Panc1 (cell line): ENCODE measurements at regions of chr12 and their contacts with region 1.

Region 1: GRCh38 chr12:43882578-43883178 is 46.8 kb downstream of the TMEM117 start:
- DNase-seq: peak; percentile 56
- ATAC-seq: peak; percentile 92
- H3K4me3 ChIP-seq: no peak overlapping the region
- H3K27ac ChIP-seq: no peak overlapping the region
- H3K4me1 ChIP-seq: no peaks in the 10 kb centered on the region; the same call in 1 of the 2 replicates
- H3K27me3 ChIP-seq: no peaks in the 10 kb centered on the region
- CTCF ChIP-seq: peak; percentile 87; the same call in 1 of the 2 replicates

Region 2: DNA sequence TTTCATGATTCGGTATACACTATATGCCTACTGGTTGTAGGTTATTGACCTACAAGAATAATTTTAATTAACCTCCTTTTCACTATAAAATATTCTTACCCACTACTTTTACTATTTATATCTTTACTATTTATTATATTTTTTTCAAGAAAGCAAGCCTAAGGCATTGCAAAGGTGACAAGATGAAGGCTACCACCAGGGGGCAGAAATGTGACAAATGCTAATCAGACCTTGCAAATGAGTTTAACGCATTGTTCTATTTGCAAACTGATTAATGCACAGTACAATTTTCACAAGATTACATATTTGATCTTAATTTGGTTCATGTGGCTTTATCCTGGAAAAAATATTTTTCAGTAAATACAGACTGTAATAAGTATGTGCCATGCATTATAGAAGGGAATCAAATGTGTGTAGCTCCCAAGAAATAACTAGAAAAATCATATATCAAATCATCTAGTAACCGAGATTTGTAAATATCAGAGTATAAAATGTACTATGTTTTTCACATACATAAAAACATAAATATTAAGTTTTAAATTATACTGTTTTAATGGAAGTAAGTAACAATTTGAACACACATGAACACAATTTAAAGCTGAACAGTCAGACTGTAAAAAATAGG is 437.6 kb before region 1 on chr12:
- CTCF ChIA-PET with region 1: interaction called, 3 read pairs
- POLR2A ChIA-PET with region 1: no interaction called
- in situ Hi-C with region 1: no loop called
- intact Hi-C with region 1: loop called (anchors 5 kb)
- DNase-seq: peak; percentile 18
- ATAC-seq: no peak; the same call in 1 of the 2 replicates
- H3K4me3 ChIP-seq: no peak overlapping the region
- H3K27ac ChIP-seq: no peak overlapping the region
- H3K4me1 ChIP-seq: no peaks in the 10 kb centered on the region
- H3K27me3 ChIP-seq: no peaks in the 10 kb centered on the region
- CTCF ChIP-seq: peak; percentile 77; the same call in 1 of the 2 replicates

Region 3: GRCh38 chr12:43501703-43502102 is 381.0 kb before region 1 on chr12:
- CTCF ChIA-PET with region 1: interaction called, 3 read pairs
- POLR2A ChIA-PET with region 1: no interaction called
- in situ Hi-C with region 1: no loop called
- intact Hi-C with region 1: loop called (anchors 5 kb)
- DNase-seq: no peak
- ATAC-seq: no peak
- H3K4me3 ChIP-seq: no peak overlapping the region
- H3K27ac ChIP-seq: no peak overlapping the region
- H3K4me1 ChIP-seq: no peaks in the 10 kb centered on the region
- H3K27me3 ChIP-seq: no peaks in the 10 kb centered on the region
- CTCF ChIP-seq: peak; percentile 66; the same call in 1 of the 2 replicates

Region 4: GRCh38 chr12:43676183-43676813 is 206.4 kb before region 1 on chr12:
- CTCF ChIA-PET with region 1: no interaction called
- POLR2A ChIA-PET with region 1: no interaction called
- in situ Hi-C with region 1: no loop called
- intact Hi-C with region 1: no loop called
- DNase-seq: peak; percentile 25
- ATAC-seq: no peak
- H3K4me3 ChIP-seq: no peak overlapping the region
- H3K27ac ChIP-seq: no peak overlapping the region
- H3K4me1 ChIP-seq: no peaks in the 10 kb centered on the region
- H3K27me3 ChIP-seq: no peaks in the 10 kb centered on the region; the same call in 1 of the 2 replicates
- CTCF ChIP-seq: peak; percentile 73

Region 5: DNA sequence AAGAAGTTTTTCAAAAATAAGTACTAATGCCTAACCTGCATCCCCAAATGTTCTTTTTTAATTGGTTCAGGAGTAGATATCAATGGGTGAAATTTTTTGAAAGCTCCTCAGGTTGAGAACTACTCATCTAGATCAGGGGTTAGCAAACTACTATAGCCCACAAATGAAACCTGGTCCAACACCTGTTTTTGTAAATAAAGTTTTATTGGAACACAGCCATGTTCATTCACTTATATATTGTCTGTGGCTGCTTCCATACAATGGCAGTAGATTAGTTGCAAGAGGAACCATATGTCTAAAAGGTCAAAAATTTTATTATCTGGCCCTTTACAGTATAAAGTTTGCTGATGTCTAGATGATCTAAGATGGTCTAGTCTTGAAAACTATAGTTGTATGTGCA is 137.9 kb before region 1 on chr12:
- CTCF ChIA-PET with region 1: no interaction called
- POLR2A ChIA-PET with region 1: no interaction called
- in situ Hi-C with region 1: no loop called
- intact Hi-C with region 1: no loop called
- DNase-seq: no peak
- ATAC-seq: no peak
- H3K4me3 ChIP-seq: no peak overlapping the region
- H3K27ac ChIP-seq: no peak overlapping the region
- H3K4me1 ChIP-seq: no peaks in the 10 kb centered on the region
- H3K27me3 ChIP-seq: no peaks in the 10 kb centered on the region
- CTCF ChIP-seq: no peak

Region 6: GRCh38 chr12:43758728-43759563 is 123.7 kb before region 1 on chr12 and contains the starts of genes IRAK4 and PUS7L:
- CTCF ChIA-PET with region 1: interaction called, 5 read pairs
- POLR2A ChIA-PET with region 1: no interaction called
- in situ Hi-C with region 1: loop called (anchors 10 kb)
- intact Hi-C with region 1: loop called (anchors 5 kb)
- DNase-seq: peak; percentile 89
- ATAC-seq: peak; percentile 99
- H3K4me3 ChIP-seq: peak within 1 kb of the TSS; percentile 85 to 90
- H3K27ac ChIP-seq: peak within 1 kb of the TSS; percentile 86
- H3K4me1 ChIP-seq: peaks cover 10% of the 10 kb centered on the region
- H3K27me3 ChIP-seq: no peaks in the 10 kb centered on the region
- CTCF ChIP-seq: peak; percentile 32
- total RNA-seq, gene IRAK4: 11.3 TPM
- total RNA-seq, gene PUS7L: 11.4 TPM

Region 7: GRCh38 chr12:43766291-43766690 is 116.4 kb before region 1 on chr12:
- CTCF ChIA-PET with region 1: interaction called, 6 read pairs
- POLR2A ChIA-PET with region 1: no interaction called
- in situ Hi-C with region 1: loop called (anchors 10 kb)
- intact Hi-C with region 1: no loop called
- DNase-seq: no peak
- ATAC-seq: no peak
- H3K4me3 ChIP-seq: no peak overlapping the region
- H3K27ac ChIP-seq: no peak overlapping the region
- H3K4me1 ChIP-seq: no peaks in the 10 kb centered on the region
- H3K27me3 ChIP-seq: no peaks in the 10 kb centered on the region
- CTCF ChIP-seq: no peak

Region 8: GRCh38 chr12:43776498-43776897 is 106.2 kb before region 1 on chr12:
- CTCF ChIA-PET with region 1: interaction called, 20 read pairs
- POLR2A ChIA-PET with region 1: no interaction called
- in situ Hi-C with region 1: no loop called
- intact Hi-C with region 1: loop called (anchors 1 kb)
- DNase-seq: no peak
- ATAC-seq: peak; percentile 78; the same call in 1 of the 2 replicates
- H3K4me3 ChIP-seq: no peak overlapping the region
- H3K27ac ChIP-seq: no peak overlapping the region
- H3K4me1 ChIP-seq: no peaks in the 10 kb centered on the region
- H3K27me3 ChIP-seq: no peaks in the 10 kb centered on the region
- CTCF ChIP-seq: peak; percentile 59; the same call in 1 of the 2 replicates

Region 9: DNA sequence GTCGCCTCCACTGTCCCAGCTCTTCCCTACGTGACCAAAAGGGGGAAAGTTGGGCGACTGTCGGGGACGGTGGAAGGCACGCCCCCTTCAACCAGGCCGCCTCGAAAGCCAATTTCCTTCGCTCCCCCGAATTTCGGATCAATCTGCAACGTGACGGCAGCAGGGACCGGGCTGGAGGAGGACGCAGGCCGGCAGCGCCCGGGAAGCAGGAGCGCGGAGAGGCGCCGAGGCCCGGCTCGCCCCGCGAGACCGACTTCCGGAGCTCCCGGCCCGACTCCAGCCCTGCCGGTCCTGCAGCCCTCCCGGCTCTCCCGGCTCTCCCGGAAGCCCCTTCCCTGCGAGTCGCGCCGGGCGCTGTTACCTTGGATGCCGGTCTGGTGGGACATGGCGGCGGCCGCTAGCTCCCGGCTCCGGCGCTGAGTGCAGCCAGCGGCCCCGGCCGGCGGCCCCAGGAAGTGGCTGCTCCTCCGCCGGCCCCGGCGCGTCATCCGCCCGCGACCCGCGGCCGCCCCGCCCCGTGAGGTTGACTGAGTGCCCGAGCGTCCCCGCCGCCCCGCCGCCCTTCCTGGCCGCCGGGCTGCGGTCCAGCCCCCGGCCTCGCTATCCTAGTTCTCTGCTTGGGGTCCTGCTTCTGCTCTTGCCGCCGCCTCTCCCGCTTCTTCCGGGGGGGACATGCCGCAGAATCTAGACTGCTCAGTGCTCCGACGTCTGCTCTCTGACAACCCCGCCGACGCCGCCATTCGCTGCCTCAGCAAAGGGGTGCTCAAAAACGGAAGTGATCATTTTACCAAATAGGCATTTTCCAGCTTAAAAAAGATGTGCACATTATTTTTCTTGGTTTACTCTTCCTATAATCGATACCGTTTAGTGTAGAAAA is 76.6 kb before region 1 on chr12 and contains the start of gene TWF1:
- CTCF ChIA-PET with region 1: interaction called, 10 read pairs
- POLR2A ChIA-PET with region 1: interaction called, 4 read pairs
- in situ Hi-C with region 1: no loop called
- intact Hi-C with region 1: no loop called
- DNase-seq: no peak
- ATAC-seq: peak; percentile 99
- H3K4me3 ChIP-seq: peak within 1 kb of the TSS; percentile 95 to 98
- H3K27ac ChIP-seq: peak within 1 kb of the TSS; percentile 98
- H3K4me1 ChIP-seq: peaks cover 18% of the 10 kb centered on the region
- H3K27me3 ChIP-seq: no peaks in the 10 kb centered on the region
- CTCF ChIP-seq: peak; percentile 30; the same call in 1 of the 2 replicates
- total RNA-seq, gene TWF1: 103 TPM